Activated naive CD4-positive, alpha-beta T cell treated with anti-CD3 and anti-CD28 coated beads for 36 hours (primary cell): ENCODE measurements at regions of chr5 and their contacts with region 1.

Region 1: GRCh38 chr5:76715736-76716455 is at the start of gene F2R:
- DNase-seq: peak; percentile 39
- H3K4me3 Mint-ChIP-seq: peak within 1 kb of the TSS; percentile 77
- H3K27ac Mint-ChIP-seq: no peak within 1 kb of the TSS
- H3K4me1 Mint-ChIP-seq: peaks cover 22% of the 10 kb centered on the region
- H3K27me3 Mint-ChIP-seq: peaks cover 48% of the 10 kb centered on the region
- total RNA-seq, gene F2R: 0.42 to 0.43 TPM

Region 2: DNA sequence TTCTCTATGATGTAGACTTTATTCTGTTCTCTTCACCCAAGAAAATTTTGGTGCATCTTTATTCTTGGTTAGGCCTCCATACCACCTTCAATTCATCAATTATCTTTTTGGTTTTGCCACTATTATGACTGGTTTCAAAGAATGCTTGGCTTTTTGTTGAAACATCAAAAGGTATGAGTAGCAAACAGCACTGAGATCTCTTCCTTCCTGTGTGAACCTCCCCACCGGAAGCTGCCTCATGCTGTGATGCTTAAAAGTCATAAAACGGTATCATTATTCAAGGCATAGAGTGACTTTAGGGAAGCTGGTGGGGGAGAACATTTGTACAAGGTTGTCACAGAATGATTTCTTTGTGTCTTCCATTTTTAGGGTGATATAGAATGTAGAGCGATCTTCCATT is 242.2 kb before region 1 on chr5:
- CTCF ChIA-PET with region 1: no interaction called
- intact Hi-C with region 1: loop called (anchors 10 kb)
- DNase-seq: peak; percentile 90
- H3K4me3 Mint-ChIP-seq: peak overlapping the region; percentile 38
- H3K27ac Mint-ChIP-seq: peak overlapping the region; percentile 92
- H3K4me1 Mint-ChIP-seq: peaks cover 76% of the 10 kb centered on the region
- H3K27me3 Mint-ChIP-seq: no peaks in the 10 kb centered on the region

Region 3: DNA sequence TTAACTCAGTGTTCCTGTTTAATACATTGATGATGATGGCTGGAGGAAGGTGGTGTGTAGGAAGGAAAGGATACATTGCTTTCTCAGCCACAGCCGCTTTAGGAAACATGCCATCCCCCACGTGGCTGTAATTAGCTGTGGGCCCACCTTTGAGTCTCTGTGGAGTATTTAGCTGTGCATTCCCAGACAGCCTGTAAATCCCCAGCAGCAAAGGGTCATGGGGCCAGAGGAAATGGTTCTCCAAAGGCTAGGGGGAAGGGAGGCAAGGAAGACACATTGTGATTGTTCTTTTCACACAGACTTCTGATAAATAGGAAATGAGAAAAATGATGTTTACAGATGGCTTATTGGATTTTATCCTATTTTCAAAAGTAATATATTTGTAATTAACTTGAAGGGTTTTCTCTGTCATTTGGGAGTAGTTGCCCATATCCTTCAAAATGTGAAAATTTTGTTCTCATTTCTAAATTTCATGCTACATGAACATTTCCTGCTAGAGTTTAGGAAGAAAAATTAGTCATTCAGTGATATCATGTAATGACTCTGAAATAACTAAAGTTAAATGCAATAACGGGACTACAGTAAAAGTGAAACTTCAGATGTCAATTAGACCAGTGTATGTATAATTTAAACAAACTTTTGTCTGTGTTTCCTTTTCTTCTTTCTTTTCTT is 24.3 kb before region 1 on chr5:
- CTCF ChIA-PET with region 1: no interaction called
- intact Hi-C with region 1: loop called (anchors 2 kb)
- DNase-seq: no peak
- H3K4me3 Mint-ChIP-seq: no peak overlapping the region
- H3K27ac Mint-ChIP-seq: peak overlapping the region; percentile 36
- H3K4me1 Mint-ChIP-seq: peaks cover 15% of the 10 kb centered on the region
- H3K27me3 Mint-ChIP-seq: no peaks in the 10 kb centered on the region

Region 4: DNA sequence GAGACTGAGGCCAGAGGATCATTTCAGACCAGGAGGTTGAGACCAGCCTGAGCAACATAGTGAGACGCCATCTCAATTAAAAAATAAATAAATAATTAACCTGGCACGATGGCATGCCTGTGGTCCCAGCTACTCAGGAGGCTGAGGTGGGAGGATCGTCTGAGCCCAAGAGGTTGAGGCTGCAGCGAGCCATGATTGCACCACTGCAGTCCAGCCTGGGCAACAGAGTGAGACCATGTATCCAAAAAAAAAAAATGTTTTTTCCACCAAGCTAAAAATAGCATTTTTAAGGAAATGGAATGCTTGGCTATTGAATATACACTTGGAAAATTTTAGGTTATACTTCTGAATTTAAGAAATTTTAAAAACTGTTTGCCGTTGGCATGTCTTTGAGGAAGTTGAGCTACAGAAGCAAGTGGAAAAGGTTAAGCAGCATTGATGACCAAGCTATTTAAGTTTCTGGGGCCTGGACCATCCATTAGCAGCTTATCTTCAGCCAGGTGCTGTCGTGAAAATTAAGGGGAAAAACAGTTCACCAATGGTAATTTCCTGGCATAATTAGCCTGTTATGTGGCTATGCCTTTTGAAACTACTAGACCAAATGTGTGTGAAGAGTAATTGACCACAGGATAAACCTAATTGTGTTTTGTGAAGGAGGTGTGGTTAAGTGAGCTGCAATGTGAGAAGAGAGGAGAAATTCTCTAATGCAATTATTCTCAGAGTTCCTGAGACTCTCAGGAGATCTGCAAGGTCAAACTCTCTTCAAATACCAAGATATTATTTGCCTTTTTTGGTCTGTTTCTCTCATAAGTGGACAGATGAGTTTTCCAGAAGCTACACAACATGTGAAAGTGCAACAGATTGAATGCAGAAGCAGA is 21.0 kb after region 1 on chr5:
- CTCF ChIA-PET with region 1: interaction called, 4 read pairs
- intact Hi-C with region 1: loop called (anchors 1 kb)
- DNase-seq: no peak
- H3K4me3 Mint-ChIP-seq: no peak overlapping the region
- H3K27ac Mint-ChIP-seq: no peak overlapping the region
- H3K4me1 Mint-ChIP-seq: peaks cover 19% of the 10 kb centered on the region
- H3K27me3 Mint-ChIP-seq: no peaks in the 10 kb centered on the region

Region 5: DNA sequence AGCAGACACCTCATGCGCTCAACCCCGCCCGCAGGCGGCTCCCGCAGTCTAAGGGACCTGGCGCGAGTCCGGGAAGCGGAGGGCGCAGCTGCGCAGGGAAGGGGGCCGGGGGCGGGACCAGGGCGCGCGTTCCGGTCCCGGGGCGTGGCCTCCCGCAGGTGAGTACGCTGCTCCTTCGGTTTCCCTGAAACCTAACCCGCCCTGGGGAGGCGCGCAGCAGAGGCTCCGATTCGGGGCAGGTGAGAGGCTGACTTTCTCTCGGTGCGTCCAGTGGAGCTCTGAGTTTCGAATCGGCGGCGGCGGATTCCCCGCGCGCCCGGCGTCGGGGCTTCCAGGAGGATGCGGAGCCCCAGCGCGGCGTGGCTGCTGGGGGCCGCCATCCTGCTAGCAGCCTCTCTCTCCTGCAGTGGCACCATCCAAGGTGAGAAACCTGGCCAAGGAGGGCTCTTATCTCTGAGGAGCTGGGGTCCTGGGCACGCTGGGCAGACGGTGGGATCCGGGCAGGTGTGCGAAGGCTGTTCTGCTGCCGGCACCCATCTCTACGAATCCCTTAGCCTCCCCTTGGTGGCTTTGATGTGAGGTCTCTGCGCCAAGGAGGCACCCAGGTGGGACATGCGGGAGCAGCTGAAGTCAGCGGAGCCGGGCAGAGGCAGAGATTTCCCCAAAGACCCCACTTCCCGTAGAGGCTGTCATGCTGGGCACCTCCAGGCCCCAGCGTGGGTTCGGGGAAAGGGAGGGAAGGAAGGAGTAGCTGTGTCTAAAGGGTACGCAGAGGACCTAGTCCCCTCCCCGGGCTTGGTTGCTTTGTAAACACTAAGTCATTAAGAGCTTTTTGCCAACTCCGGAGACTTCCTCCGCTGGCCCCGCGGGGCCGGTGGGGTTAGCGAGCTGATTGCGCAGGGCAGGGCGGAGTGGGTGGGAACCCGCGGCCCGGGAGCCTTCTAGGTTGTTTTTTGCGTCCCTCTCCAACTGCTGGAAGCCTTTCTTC is 103.2 kb after region 1 on chr5 and contains the start of gene F2RL1:
- CTCF ChIA-PET with region 1: no interaction called
- intact Hi-C with region 1: loop called (anchors 1 kb)
- DNase-seq: peak; percentile 67
- H3K4me3 Mint-ChIP-seq: peak within 1 kb of the TSS; percentile 80
- H3K27ac Mint-ChIP-seq: no peak within 1 kb of the TSS
- H3K4me1 Mint-ChIP-seq: peaks cover 16% of the 10 kb centered on the region
- H3K27me3 Mint-ChIP-seq: peaks cover 11% of the 10 kb centered on the region
- total RNA-seq, gene F2RL1: 2.9 to 3.0 TPM

Region 6: GRCh38 chr5:76849419-76850291 is 133.8 kb after region 1 on chr5 and contains the start of gene S100Z:
- CTCF ChIA-PET with region 1: no interaction called
- intact Hi-C with region 1: loop called (anchors 5 kb)
- DNase-seq: peak; percentile 73
- H3K4me3 Mint-ChIP-seq: peak within 1 kb of the TSS; percentile 34
- H3K27ac Mint-ChIP-seq: peak within 1 kb of the TSS; percentile 8
- H3K4me1 Mint-ChIP-seq: peaks cover 15% of the 10 kb centered on the region
- H3K27me3 Mint-ChIP-seq: no peaks in the 10 kb centered on the region
- total RNA-seq, gene S100Z: 0.81 to 1.1 TPM

Region 7: GRCh38 chr5:76901522-76901921 is 185.6 kb after region 1 on chr5:
- CTCF ChIA-PET with region 1: no interaction called
- intact Hi-C with region 1: no loop called
- DNase-seq: no peak
- H3K4me3 Mint-ChIP-seq: no peak overlapping the region
- H3K27ac Mint-ChIP-seq: no peak overlapping the region
- H3K4me1 Mint-ChIP-seq: no peaks in the 10 kb centered on the region
- H3K27me3 Mint-ChIP-seq: no peaks in the 10 kb centered on the region

Region 8: DNA sequence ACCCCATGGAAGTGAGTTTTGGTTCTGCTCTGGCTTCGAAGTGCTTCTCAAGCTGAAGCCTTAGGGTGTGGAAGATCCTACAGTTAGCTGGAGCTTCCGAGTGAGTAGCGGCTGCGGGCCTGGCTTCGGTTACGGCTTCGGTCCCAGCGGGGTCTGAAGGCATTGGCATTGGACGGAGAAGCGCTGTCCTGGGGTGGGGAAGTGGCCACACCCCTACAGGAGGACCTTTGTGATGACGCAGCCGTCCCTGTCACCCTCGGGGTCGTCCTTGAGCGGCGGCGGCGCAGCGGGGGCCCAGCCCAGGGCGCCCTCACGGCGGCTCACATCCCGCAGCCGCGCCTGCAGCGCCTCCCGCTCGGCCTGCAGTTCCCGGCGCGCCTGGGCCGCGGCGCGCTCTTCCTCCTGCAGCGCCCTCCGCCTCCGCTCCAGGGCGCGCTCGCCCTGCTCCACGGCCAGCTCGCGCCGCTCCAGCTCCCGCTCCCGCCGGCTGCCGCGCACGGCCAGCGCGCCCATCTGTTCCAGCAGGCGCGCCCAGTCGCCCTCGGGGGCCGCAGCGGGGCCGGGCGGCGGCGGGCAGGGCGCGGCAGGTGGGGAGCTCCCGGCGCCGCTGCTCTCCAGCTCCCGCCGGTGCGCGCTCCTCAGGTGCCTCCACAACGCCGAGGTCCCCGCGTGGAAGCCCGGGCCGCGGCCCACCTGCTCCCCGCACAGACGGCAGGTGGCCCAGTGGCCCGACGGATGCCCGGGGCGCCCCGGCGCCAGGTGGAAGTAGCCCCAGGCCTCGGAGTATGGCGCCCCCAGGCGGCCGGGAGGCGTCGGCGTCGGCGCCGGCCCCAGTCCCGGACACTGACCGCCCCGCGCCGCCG is 361.3 kb after region 1 on chr5:
- CTCF ChIA-PET with region 1: no interaction called
- intact Hi-C with region 1: loop called (anchors 1 kb)
- DNase-seq: peak; percentile 61
- H3K4me3 Mint-ChIP-seq: peak overlapping the region; percentile 37
- H3K27ac Mint-ChIP-seq: no peak overlapping the region
- H3K4me1 Mint-ChIP-seq: peaks cover 7% of the 10 kb centered on the region
- H3K27me3 Mint-ChIP-seq: no peaks in the 10 kb centered on the region